ENCODE measurements at regions of chr3 and their contacts with region 1.

Region 1: DNA sequence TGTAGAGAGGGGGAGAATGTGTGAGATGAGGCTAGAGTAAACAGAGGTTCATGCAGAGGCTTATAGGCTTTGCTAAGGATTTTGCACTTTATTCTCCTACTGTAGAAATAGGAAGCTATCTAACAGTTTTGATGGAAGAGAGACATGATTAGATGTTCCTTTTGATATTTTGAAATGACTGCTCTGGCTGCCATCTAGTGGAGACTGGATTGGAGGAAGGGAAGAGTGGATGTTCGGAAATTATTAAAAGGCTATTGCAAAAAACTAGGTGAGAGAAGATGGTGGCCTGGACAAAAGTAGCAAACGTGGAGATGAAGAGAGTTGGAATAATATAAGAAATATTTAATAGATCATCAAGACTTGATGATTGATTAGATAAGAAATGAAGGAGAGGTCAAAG is 42.2 kb downstream of the SYN2 start:
- DNase-seq: peak; percentile 16
- ATAC-seq: peak; percentile 52
- H3K4me3 ChIP-seq: no peak overlapping the region
- H3K27ac ChIP-seq: no peak overlapping the region
- H3K4me1 ChIP-seq: no peaks in the 10 kb centered on the region
- H3K27me3 ChIP-seq: no peaks in the 10 kb centered on the region; the same call in 1 of the 2 replicates
- CTCF ChIP-seq: peak; percentile 56 to 60 (median 57); a peak in 5 of 6 replicates
- POLR2A ChIP-seq: no peak
- RAD21 ChIP-seq: peak; percentile 70

Region 2: GRCh38 chr3:11846281-11847034 is 199.9 kb before region 1 on chr3 and contains the start of gene TAMM41:
- CTCF ChIA-PET with region 1: no interaction called
- POLR2A ChIA-PET with region 1: no interaction called
- RAD21 ChIA-PET with region 1: no interaction called
- intact Hi-C with region 1: loop called (anchors 1 kb)
- DNase-seq: peak; percentile 81
- ATAC-seq: peak; percentile 98
- H3K4me3 ChIP-seq: peak within 1 kb of the TSS; percentile 94 to 99
- H3K27ac ChIP-seq: peak within 1 kb of the TSS; percentile 59
- H3K4me1 ChIP-seq: peaks cover 11 to 16% of the 10 kb centered on the region in 2 experiments; a peak in 3 of 4 replicates
- H3K27me3 ChIP-seq: no peaks in the 10 kb centered on the region
- CTCF ChIP-seq: peak; percentile 64 to 66 (median 66)
- POLR2A ChIP-seq: peak; percentile 85
- RAD21 ChIP-seq: 0 out of 2 replicates have a peak, but pooled peaks have one; percentile 18
- total RNA-seq, gene TAMM41: 17.9 TPM

Region 3: GRCh38 chr3:11878840-11879239 is 167.6 kb before region 1 on chr3:
- CTCF ChIA-PET with region 1: no interaction called
- POLR2A ChIA-PET with region 1: no interaction called
- RAD21 ChIA-PET with region 1: no interaction called
- intact Hi-C with region 1: loop called (anchors 10 kb)
- DNase-seq: peak; percentile 21
- ATAC-seq: peak; percentile 72
- H3K4me3 ChIP-seq: no peak overlapping the region
- H3K27ac ChIP-seq: no peak overlapping the region
- H3K4me1 ChIP-seq: no peaks in the 10 kb centered on the region
- H3K27me3 ChIP-seq: no peaks in the 10 kb centered on the region
- CTCF ChIP-seq: peak in 2 of 3 experiments; percentile 28 to 30; a peak in 3 of 6 replicates
- POLR2A ChIP-seq: no peak
- RAD21 ChIP-seq: peak; percentile 50